ENCODE measurements at regions of chr15 and their contacts with region 1.

Region 1: DNA sequence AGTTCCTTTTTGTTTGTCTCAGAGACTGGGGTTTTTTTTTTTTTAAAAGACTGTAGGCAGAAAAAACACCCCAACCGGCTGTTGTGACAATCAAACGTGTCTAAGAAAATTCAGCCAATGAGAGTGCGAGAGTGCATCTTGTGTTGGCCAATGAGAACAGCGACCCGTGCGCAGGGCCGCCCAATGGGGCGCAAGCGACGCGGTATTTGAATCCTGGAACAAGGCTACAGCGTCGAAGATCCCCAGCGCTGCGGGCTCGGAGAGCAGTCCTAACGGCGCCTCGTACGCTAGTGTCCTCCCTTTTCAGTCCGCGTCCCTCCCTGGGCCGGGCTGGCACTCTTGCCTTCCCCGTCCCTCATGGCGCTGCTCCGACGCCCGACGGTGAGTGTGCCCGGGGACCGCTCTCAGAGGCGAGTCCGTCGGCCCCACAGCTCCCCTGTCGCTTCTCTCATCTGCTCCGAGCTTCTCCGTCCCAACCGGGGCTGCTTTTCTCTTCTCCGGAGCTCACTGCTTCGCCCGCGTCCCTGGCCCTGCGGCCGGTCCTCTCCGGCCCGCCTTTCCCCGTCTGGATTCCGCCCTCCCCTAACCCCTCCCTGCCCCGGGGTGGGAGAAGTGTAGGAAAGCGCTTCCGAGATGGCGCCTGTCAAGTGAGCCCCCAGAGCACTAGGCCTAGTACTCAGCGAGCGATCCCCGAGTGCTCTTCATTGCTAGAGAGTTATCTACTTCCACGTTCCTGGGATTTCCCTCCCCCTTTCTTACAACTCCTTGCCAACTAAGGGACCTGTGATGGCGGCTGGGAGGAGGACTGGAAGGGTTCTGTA is at the start of gene CCNB2:
- DNase-seq: peak; percentile 86
- H3K4me3 Mint-ChIP-seq: peak within 1 kb of the TSS; percentile 96
- H3K27ac Mint-ChIP-seq: peak within 1 kb of the TSS; percentile 99
- H3K4me1 Mint-ChIP-seq: peaks cover 22% of the 10 kb centered on the region
- H3K27me3 Mint-ChIP-seq: no peaks in the 10 kb centered on the region
- total RNA-seq, gene CCNB2: 57.5 and 59.2 TPM in 2 replicates

Region 2: GRCh38 chr15:58933281-58934113 is 171.6 kb before region 1 on chr15 and contains the start of gene SLTM:
- intact Hi-C with region 1: loop called (anchors 5 kb)
- DNase-seq: peak; percentile 89
- H3K4me3 Mint-ChIP-seq: peak within 1 kb of the TSS; percentile 97
- H3K27ac Mint-ChIP-seq: peak within 1 kb of the TSS; percentile 100
- H3K4me1 Mint-ChIP-seq: peaks cover 16% of the 10 kb centered on the region
- H3K27me3 Mint-ChIP-seq: no peaks in the 10 kb centered on the region
- total RNA-seq, gene SLTM: 108 and 120 TPM in 2 replicates

Region 3: DNA sequence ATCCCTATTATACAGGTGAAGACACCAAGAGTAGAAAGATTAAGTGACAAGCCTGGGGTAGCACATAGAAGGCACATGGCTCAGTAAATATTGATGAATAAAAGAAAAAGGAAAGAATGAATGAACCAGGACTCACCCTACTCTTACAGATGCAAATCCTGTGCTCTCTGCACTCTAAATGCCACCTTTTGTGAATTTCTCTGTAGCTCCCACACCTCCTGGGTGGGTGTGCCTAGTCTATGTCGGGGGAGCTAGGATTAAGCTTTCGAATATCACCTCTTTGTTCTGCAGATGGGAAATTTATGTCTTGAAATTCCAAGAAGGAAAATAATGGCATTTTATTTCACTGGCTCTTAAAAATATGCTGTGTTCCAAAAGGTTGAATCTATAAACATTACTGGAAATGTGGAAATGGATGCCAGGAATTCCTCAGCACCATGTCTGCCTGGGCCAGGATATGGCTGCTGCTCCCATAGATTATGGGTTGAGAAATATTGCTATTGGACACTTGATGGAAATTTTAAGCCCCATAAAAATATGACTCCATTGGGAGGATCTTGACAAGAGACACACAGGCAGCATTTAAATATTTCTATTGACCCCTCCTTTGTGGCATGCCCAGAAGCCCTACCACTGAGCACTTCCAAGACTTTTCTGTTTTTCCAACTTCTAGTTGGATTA is 43.2 kb after region 1 on chr15:
- intact Hi-C with region 1: no loop called
- DNase-seq: no peak
- H3K4me3 Mint-ChIP-seq: no peak overlapping the region
- H3K27ac Mint-ChIP-seq: no peak overlapping the region
- H3K4me1 Mint-ChIP-seq: no peaks in the 10 kb centered on the region
- H3K27me3 Mint-ChIP-seq: no peaks in the 10 kb centered on the region

Region 4: GRCh38 chr15:59174835-59175831 is 70.0 kb after region 1 on chr15:
- intact Hi-C with region 1: no loop called
- DNase-seq: peak; percentile 22
- H3K4me3 Mint-ChIP-seq: no peak overlapping the region
- H3K27ac Mint-ChIP-seq: no peak overlapping the region
- H3K4me1 Mint-ChIP-seq: peaks cover 16% of the 10 kb centered on the region
- H3K27me3 Mint-ChIP-seq: peaks cover 6% of the 10 kb centered on the region

Region 5: DNA sequence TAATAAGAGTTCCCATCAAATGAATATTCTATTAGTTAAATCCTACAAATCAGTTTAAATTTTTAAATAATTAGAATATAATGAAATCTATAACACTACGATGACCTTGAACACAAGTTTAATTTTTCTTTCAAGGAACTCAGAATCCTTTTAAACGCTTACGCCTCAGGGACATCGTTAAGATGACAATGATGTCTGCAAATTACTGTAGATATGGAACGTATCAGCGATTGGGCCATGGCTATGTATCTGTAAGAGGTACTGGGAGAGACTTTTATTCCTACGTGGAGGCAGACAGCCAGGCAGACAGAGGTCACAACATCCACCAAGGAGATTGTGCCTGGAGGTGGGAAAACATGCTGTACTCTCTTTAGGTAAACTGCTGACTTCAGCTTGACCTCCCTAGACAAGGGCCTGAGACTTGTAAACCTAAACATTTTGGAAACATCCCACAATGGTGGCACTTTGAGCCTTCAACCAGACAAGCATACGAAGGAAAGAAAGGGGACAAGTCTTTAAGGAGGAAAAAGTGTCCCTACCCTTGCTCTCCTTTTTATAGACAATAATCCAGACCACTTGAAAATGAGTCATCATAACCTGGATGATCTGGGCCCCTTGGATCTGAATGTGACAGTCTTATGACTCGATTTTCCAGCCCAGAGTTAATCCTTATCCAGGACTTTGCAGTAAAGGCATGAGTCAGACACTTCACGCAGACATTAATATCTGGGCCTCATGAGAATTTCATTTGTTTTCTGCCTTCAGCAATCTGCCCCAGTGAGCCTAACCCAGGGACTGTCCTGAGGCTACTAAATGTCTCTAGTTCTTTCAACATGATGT is 94.7 kb after region 1 on chr15:
- intact Hi-C with region 1: no loop called
- DNase-seq: no peak
- H3K4me3 Mint-ChIP-seq: no peak overlapping the region
- H3K27ac Mint-ChIP-seq: no peak overlapping the region
- H3K4me1 Mint-ChIP-seq: no peaks in the 10 kb centered on the region
- H3K27me3 Mint-ChIP-seq: peaks cover 2% of the 10 kb centered on the region

Region 6: DNA sequence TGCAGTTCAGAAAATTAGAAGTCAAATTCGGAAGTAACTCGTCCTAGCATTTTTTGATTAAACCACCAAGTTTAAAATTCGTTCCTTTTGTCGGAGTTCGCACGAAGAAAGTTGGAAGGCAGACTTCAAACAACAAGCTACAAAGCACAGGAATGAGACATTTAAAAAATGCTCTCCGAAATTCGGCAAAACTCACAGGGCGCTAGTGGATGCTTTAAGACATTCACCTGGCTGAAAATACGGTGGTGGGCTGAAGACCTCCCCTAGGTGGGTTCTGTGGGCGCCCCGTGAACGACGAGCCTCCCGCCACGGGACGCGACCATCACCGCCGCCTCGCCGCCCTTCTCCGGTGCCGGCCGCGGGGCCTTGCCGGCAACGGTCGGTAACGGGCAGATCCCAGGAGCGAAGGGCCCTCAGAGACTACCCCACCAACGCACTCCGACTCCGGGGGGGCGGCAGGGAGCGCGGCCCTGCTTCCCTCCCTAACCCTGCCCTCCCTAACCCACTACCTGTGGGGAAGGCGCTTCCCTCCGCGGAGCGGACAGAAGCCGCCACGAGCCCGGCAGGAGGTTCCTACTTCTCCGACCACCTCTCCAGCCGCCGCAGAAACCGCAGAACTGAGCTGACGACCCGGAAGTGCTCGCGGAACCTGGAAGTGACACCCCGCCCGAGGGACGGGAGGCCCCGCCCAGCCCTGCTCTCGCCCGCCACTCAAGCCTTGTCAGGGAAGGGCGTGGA is 551.9 kb after region 1 on chr15 and contains the start of gene GTF2A2:
- intact Hi-C with region 1: loop called (anchors 10 kb)
- DNase-seq: peak; percentile 94
- H3K4me3 Mint-ChIP-seq: no peak within 1 kb of the TSS
- H3K27ac Mint-ChIP-seq: peak within 1 kb of the TSS; percentile 87
- H3K4me1 Mint-ChIP-seq: peaks cover 10% of the 10 kb centered on the region
- H3K27me3 Mint-ChIP-seq: no peaks in the 10 kb centered on the region
- total RNA-seq, gene GTF2A2: 187 and 193 TPM in 2 replicates